ENCODE measurements at regions of chrX and their contacts with region 1.

Region 1: GRCh38 chrX:10189317-10190268 is 32.8 kb downstream of the CLCN4 start:
- DNase-seq: peak; percentile 50 to 62
- H3K4me3 ChIP-seq: no peak overlapping the region
- H3K27ac ChIP-seq: no peak overlapping the region
- H3K4me1 ChIP-seq: peaks cover 9% of the 10 kb centered on the region
- H3K27me3 ChIP-seq: no peaks in the 10 kb centered on the region
- CTCF ChIP-seq: peak; percentile 85

Region 2: GRCh38 chrX:10326578-10326977 is 137.0 kb after region 1 on chrX:
- CTCF ChIA-PET with region 1: no interaction called
- POLR2A ChIA-PET with region 1: no interaction called
- intact Hi-C with region 1: loop called (anchors 1 kb)
- DNase-seq: peak in 1 of 2 experiments; percentile 38
- H3K4me3 ChIP-seq: no peak overlapping the region
- H3K27ac ChIP-seq: no peak overlapping the region
- H3K4me1 ChIP-seq: no peaks in the 10 kb centered on the region
- H3K27me3 ChIP-seq: no peaks in the 10 kb centered on the region
- CTCF ChIP-seq: peak; percentile 35

Region 3: GRCh38 chrX:10615931-10616775 is 426.6 kb after region 1 on chrX:
- CTCF ChIA-PET with region 1: no interaction called
- POLR2A ChIA-PET with region 1: interaction called, 4 read pairs
- intact Hi-C with region 1: loop called (anchors 1 kb)
- DNase-seq: peak in 1 of 2 experiments; percentile 43
- H3K4me3 ChIP-seq: peak overlapping the region; percentile 63; the same call in 1 of the 2 replicates
- H3K27ac ChIP-seq: peak overlapping the region; percentile 91
- H3K4me1 ChIP-seq: peaks cover 49% of the 10 kb centered on the region
- H3K27me3 ChIP-seq: no peaks in the 10 kb centered on the region
- CTCF ChIP-seq: peak; percentile 68

Region 4: GRCh38 chrX:10722851-10723250 is 533.3 kb after region 1 on chrX:
- CTCF ChIA-PET with region 1: no interaction called
- POLR2A ChIA-PET with region 1: no interaction called
- intact Hi-C with region 1: loop called (anchors 1 kb)
- DNase-seq: peak in 1 of 2 experiments; percentile 37
- H3K4me3 ChIP-seq: no peak overlapping the region
- H3K27ac ChIP-seq: no peak overlapping the region
- H3K4me1 ChIP-seq: no peaks in the 10 kb centered on the region
- H3K27me3 ChIP-seq: no peaks in the 10 kb centered on the region
- CTCF ChIP-seq: peak; percentile 82

Region 5: DNA sequence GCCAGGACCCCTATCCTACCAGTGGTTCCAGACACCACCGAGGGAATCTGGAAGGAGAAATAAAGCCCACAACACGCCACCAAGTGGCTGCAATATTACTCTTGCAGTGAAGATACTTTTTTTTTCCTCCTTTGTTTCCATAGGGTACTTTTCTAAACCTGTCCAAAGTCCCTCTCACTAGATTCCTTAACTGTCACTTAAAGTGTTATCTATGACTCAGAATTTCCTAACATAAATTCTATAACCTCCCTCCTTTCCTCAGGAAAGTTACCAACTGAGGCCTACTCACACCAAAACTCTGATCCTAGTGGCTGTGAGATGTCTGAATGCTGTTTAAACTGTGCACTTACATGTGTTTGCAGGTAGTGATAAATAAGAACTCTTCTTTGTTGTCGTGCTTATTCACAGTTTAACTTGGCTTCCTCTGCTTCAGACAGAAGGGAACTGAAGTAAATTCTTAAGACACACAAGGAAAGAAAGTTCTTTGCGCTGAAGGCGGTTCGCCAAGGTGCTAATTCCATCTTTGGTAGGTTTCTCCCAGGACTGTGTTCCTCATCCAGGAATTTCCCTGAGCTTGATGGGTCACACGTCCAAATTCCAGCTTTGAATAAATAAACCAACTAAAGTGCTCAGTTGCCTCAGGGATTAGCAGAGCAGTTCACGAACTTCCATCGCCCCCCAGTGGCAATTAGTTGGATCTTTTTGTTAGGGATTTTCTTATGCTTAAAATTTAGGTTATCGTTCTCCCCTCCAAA is 910.9 kb after region 1 on chrX:
- CTCF ChIA-PET with region 1: interaction called, 13 read pairs
- POLR2A ChIA-PET with region 1: no interaction called
- intact Hi-C with region 1: loop called (anchors 1 kb)
- DNase-seq: peak in 1 of 2 experiments; percentile 24
- H3K4me3 ChIP-seq: no peak overlapping the region
- H3K27ac ChIP-seq: no peak overlapping the region
- H3K4me1 ChIP-seq: no peaks in the 10 kb centered on the region
- H3K27me3 ChIP-seq: no peaks in the 10 kb centered on the region
- CTCF ChIP-seq: peak; percentile 70

Region 6: GRCh38 chrX:11143931-11144678 is 954.5 kb after region 1 on chrX:
- CTCF ChIA-PET with region 1: no interaction called
- POLR2A ChIA-PET with region 1: no interaction called
- intact Hi-C with region 1: loop called (anchors 1 kb)
- DNase-seq: peak; percentile 30 to 36
- H3K4me3 ChIP-seq: no peak overlapping the region
- H3K27ac ChIP-seq: no peak overlapping the region
- H3K4me1 ChIP-seq: no peaks in the 10 kb centered on the region
- H3K27me3 ChIP-seq: no peaks in the 10 kb centered on the region
- CTCF ChIP-seq: peak; percentile 66